Endothelial cell of umbilical vein (primary cell): ENCODE measurements at regions of chr18 and their contacts with region 1.

Region 1: DNA sequence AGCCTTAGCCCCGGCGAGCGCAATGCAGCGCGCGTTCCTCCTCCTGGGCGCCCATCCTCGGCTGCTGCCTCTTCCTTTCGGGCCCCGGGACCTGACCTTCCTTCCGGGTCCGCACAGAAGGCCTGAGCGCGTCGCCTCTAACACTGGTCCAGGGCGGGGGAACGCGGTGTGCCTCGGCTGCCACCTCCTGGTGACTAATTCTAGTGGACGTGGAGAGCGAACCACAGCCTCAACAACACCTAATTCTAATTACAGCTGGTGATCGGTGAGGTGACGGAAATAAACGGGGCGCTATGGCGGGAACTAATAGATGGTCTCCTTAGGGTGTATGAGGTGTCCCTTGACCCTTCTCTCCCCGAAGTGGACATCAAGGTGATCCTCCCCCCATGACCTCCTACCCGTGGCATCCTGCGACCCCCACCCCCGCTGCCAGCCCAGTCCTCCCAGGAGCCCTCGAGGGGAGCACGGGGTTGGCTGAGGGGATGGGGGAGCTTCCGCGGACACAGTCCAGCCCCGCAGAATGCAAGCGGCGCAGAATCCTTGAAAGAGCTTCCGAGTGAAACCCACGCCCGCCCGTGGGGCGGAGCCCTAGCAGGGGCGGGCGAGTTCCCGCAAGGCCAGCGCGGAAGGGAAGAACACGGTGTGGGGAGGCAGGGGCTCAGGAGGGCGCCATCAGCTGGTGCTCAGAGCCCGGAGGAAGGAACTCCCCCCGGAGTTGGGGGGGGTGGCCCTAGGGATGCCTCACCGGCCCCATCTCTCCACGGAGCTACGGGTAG is 12.8 kb upstream of the HMSD start:
- DNase-seq: peak; percentile 67
- H3K4me3 ChIP-seq: peak overlapping the region; percentile 46 to 52 (median 51)
- H3K27ac ChIP-seq: no peak overlapping the region
- H3K4me1 ChIP-seq: peaks cover 8% of the 10 kb centered on the region
- H3K27me3 ChIP-seq: peaks cover 2 to 9% of the 10 kb centered on the region in 2 experiments
- CTCF ChIP-seq: peak; percentile 75 to 78
- POLR2A ChIP-seq: no peak

Region 2: GRCh38 chr18:63511286-63511685 is 425.1 kb before region 1 on chr18:
- CTCF ChIA-PET with region 1: interaction called, 112 read pairs
- POLR2A ChIA-PET with region 1: no interaction called
- dilution Hi-C with region 1: no loop called
- intact Hi-C with region 1: no loop called
- DNase-seq: peak; percentile 33
- H3K4me3 ChIP-seq: no peak overlapping the region
- H3K27ac ChIP-seq: no peak overlapping the region
- H3K4me1 ChIP-seq: no peaks in the 10 kb centered on the region
- H3K27me3 ChIP-seq: peaks cover 5 to 11% of the 10 kb centered on the region in 2 experiments
- CTCF ChIP-seq: peak; percentile 52 to 56
- POLR2A ChIP-seq: no peak

Region 3: GRCh38 chr18:63578357-63578958 is 357.9 kb before region 1 on chr18:
- CTCF ChIA-PET with region 1: interaction called, 14 read pairs
- POLR2A ChIA-PET with region 1: no interaction called
- dilution Hi-C with region 1: no loop called
- intact Hi-C with region 1: loop called (anchors 5 kb)
- DNase-seq: peak; percentile 53
- H3K4me3 ChIP-seq: no peak overlapping the region
- H3K27ac ChIP-seq: no peak overlapping the region
- H3K4me1 ChIP-seq: no peaks in the 10 kb centered on the region
- H3K27me3 ChIP-seq: no peaks in the 10 kb centered on the region
- CTCF ChIP-seq: peak; percentile 52 to 63
- POLR2A ChIP-seq: no peak

Region 4: DNA sequence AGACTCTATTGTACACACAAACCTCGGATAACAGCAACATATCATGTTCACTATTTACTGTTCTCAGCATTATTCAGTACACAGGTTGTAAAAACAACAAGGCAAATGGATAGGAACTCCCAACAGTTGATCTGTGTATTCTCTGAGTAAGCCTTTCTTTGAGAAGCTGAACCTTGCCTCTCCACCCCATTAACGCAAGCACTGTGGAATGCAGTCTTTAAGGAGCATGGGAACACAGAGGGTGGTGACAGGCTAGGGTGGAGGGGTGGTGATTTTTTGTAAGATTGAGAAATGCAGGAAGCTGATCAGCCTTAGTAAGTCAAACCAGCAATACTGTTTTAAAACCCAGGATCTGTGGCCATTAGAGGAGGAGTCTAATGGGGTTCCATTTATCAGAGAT is 253.2 kb before region 1 on chr18:
- CTCF ChIA-PET with region 1: no interaction called
- POLR2A ChIA-PET with region 1: no interaction called
- dilution Hi-C with region 1: no loop called
- intact Hi-C with region 1: no loop called
- DNase-seq: no peak
- H3K4me3 ChIP-seq: no peak overlapping the region
- H3K27ac ChIP-seq: no peak overlapping the region
- H3K4me1 ChIP-seq: no peaks in the 10 kb centered on the region
- H3K27me3 ChIP-seq: no peaks in the 10 kb centered on the region
- CTCF ChIP-seq: no peak
- POLR2A ChIP-seq: no peak

Region 5: DNA sequence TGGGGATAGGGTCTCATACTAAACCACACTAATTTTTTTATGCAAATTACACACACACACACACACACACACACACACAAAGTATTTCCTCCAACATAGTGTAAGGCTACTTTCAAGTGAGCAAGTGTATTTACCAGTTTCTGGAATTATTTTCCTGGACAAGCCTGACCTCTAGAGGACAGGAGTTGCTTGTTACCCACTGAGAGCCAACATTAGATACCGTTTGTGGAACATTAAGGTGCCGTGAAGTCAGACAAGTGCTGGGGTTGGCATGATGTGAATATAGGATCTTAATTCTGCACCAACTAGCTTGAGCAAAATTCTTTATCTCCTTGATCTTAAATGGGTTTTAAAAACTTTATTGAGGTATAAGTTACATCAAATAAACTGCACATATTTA is 88.2 kb before region 1 on chr18:
- CTCF ChIA-PET with region 1: interaction called, 22 read pairs
- POLR2A ChIA-PET with region 1: no interaction called
- dilution Hi-C with region 1: no loop called
- intact Hi-C with region 1: loop called (anchors 1 kb)
- DNase-seq: peak; percentile 62
- H3K4me3 ChIP-seq: no peak overlapping the region
- H3K27ac ChIP-seq: no peak overlapping the region
- H3K4me1 ChIP-seq: no peaks in the 10 kb centered on the region
- H3K27me3 ChIP-seq: no peaks in the 10 kb centered on the region
- CTCF ChIP-seq: peak; percentile 56 to 57
- POLR2A ChIP-seq: no peak

Region 6: GRCh38 chr18:63890950-63891304 is 45.4 kb before region 1 on chr18:
- CTCF ChIA-PET with region 1: interaction called, 5 read pairs
- POLR2A ChIA-PET with region 1: no interaction called
- dilution Hi-C with region 1: no loop called
- intact Hi-C with region 1: loop called (anchors 1 kb)
- DNase-seq: peak; percentile 21
- H3K4me3 ChIP-seq: no peak overlapping the region
- H3K27ac ChIP-seq: no peak overlapping the region
- H3K4me1 ChIP-seq: no peaks in the 10 kb centered on the region
- H3K27me3 ChIP-seq: no peaks in the 10 kb centered on the region
- CTCF ChIP-seq: no peak
- POLR2A ChIP-seq: no peak

Region 7: GRCh38 chr18:63949068-63949737 is 12.9 kb after region 1 on chr18 and contains the start of gene HMSD:
- CTCF ChIA-PET with region 1: interaction called, 10 read pairs
- POLR2A ChIA-PET with region 1: no interaction called
- dilution Hi-C with region 1: no loop called
- intact Hi-C with region 1: no loop called
- DNase-seq: peak; percentile 17
- H3K4me3 ChIP-seq: peak within 1 kb of the TSS in 2 of 3 experiments; percentile 2 to 23
- H3K27ac ChIP-seq: no peak within 1 kb of the TSS
- H3K4me1 ChIP-seq: peaks cover 5% of the 10 kb centered on the region
- H3K27me3 ChIP-seq: peaks cover 0 to 7% of the 10 kb centered on the region in 2 experiments
- CTCF ChIP-seq: peak; percentile 37 to 59
- POLR2A ChIP-seq: no peak
- total RNA-seq, gene HMSD: not detected in 2 replicates

Region 8: GRCh38 chr18:63994783-63995399 is 58.5 kb after region 1 on chr18:
- CTCF ChIA-PET with region 1: interaction called, 8 read pairs
- POLR2A ChIA-PET with region 1: no interaction called
- dilution Hi-C with region 1: no loop called
- intact Hi-C with region 1: loop called (anchors 1 kb)
- DNase-seq: peak; percentile 51
- H3K4me3 ChIP-seq: no peak overlapping the region
- H3K27ac ChIP-seq: no peak overlapping the region
- H3K4me1 ChIP-seq: no peaks in the 10 kb centered on the region
- H3K27me3 ChIP-seq: no peaks in the 10 kb centered on the region
- CTCF ChIP-seq: peak; percentile 83 to 90
- POLR2A ChIP-seq: no peak